H1 (cell line): ENCODE measurements at regions of chr12 and their contacts with region 1.

Region 1: GRCh38 chr12:1634590-1635191 is 5.7 kb downstream of the WNT5B start:
- DNase-seq: peak; percentile 56 to 88
- H3K4me3 ChIP-seq: no peak overlapping the region
- H3K27ac ChIP-seq: no peak overlapping the region
- H3K4me1 ChIP-seq: peaks cover 2 to 18% (median 15%) of the 10 kb centered on the region in 4 experiments
- H3K27me3 ChIP-seq: peaks cover 31 to 61% (median 47%) of the 10 kb centered on the region in 4 experiments
- CTCF ChIP-seq: peak; percentile 82 to 89 (median 86)
- EP300 ChIP-seq: no peak
- POLR2A ChIP-seq: no peak
- RAD21 ChIP-seq: peak; percentile 79 to 88

Region 2: GRCh38 chr12:1510056-1510812 is 124.5 kb before region 1 on chr12:
- CTCF ChIA-PET with region 1: no interaction called
- POLR2A ChIA-PET with region 1: no interaction called
- DNase-seq: peak in 1 of 2 experiments; percentile 10
- H3K4me3 ChIP-seq: no peak overlapping the region
- H3K27ac ChIP-seq: no peak overlapping the region
- H3K4me1 ChIP-seq: no peaks in the 10 kb centered on the region; a peak in 1 of 7 replicates
- H3K27me3 ChIP-seq: no peaks in the 10 kb centered on the region
- CTCF ChIP-seq: no peak
- EP300 ChIP-seq: no peak
- POLR2A ChIP-seq: no peak
- RAD21 ChIP-seq: no peak

Region 3: DNA sequence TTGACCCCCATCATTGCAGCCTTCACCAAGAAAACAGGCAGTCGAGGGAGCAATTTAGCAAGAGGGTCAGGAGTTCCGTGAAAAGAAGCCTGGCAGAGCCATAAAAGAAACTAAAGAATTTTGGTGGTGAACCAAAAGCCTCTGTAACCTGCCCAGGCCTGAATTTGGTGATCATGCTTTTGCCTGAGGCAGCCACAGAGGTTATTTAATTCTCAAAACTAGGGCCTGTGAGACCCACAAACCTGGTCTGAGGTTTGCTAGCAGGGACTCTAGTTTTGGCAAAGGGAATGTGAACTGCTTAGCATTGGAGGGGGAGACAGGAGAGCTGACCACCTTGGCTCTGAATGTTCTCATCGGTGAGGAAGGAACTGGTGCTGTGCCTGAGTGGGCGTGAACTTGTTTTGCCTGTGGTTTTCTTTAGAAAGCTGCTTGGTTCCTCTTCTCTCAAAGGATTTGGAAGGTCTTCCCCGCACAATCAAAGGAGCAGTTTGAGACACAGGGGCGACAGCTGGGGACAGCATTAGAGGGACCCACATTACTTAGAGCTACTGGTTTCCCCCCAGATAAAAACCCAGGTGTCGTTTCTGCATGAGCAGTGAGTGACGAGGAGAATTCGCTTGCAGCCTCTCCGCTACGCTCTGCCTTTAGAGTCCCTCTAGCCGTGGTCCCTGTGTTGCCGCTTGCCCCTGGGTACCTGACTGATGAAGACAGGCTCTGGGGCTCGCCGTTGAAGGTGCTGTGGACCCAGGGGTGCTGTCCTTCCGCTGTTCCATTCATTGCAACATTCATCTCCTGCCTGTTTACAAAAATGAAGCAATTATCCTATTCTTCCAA is 18.2 kb before region 1 on chr12:
- CTCF ChIA-PET with region 1: interaction called, 13 read pairs
- POLR2A ChIA-PET with region 1: no interaction called
- DNase-seq: no peak
- H3K4me3 ChIP-seq: no peak overlapping the region
- H3K27ac ChIP-seq: no peak overlapping the region
- H3K4me1 ChIP-seq: no peaks in the 10 kb centered on the region; a peak in 1 of 7 replicates
- H3K27me3 ChIP-seq: peaks cover 0 to 9% (median 2%) of the 10 kb centered on the region in 4 experiments; a peak in 4 of 7 replicates
- CTCF ChIP-seq: no peak
- EP300 ChIP-seq: no peak
- POLR2A ChIP-seq: no peak
- RAD21 ChIP-seq: no peak

Region 4: DNA sequence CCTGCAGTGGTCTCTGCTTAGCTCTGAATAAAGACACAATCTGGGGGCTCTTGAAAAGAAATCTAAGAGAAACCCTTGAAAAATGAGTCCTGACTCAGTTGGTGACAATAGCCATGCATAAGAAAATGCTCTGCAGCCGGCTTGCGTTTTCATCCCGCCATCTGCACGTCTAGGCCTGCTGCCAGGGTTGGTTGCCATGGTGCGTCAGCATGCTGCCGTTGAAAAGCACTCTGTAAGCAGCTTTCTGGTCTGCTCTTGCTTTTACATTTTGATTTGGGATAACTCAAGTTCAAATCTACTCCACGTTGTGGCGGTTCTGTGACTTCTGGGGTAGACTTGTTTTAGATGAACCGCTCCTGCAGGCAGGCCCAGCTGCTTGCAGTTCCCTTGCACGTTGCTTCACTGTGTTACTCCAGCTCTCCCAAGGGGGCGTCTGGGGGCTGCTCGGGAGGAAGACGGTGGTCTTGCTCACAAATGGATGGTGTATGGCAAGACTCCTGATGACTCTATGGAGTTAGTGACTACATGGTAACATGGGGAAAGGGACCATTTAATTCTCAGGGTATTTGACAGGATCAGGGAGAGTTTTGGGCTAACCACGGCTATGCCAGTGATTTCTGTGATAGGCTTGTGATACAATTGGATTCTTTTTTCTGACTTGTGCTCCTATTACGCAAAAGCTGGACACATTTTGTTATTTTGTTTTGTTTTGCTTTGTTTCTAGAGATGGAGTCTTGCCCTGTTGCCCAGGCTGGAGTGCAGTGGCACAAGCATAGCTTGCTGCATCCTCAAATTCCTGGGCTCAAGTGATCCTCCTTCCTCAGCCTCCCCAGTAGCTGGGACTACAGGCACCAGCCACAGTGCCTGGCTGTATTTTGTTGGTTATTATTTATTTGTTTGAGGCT is 10.1 kb after region 1 on chr12:
- CTCF ChIA-PET with region 1: interaction called, 36 read pairs
- POLR2A ChIA-PET with region 1: no interaction called
- DNase-seq: no peak
- H3K4me3 ChIP-seq: no peak overlapping the region
- H3K27ac ChIP-seq: no peak overlapping the region
- H3K4me1 ChIP-seq: peaks cover 0 to 5% (median 0%) of the 10 kb centered on the region in 4 experiments; a peak in 2 of 7 replicates
- H3K27me3 ChIP-seq: peaks cover 0 to 2% (median 1%) of the 10 kb centered on the region in 4 experiments; a peak in 2 of 7 replicates
- CTCF ChIP-seq: peak in 2 of 3 experiments; percentile 9 to 10; a peak in 1 of 4 replicates
- EP300 ChIP-seq: no peak
- POLR2A ChIP-seq: no peak
- RAD21 ChIP-seq: peak in 1 of 2 experiments; percentile 13; a peak in 1 of 4 replicates

Region 5: GRCh38 chr12:1650260-1650977 is 15.7 kb after region 1 on chr12:
- CTCF ChIA-PET with region 1: interaction called, 36 read pairs
- POLR2A ChIA-PET with region 1: interaction called, 3 read pairs
- DNase-seq: no peak
- H3K4me3 ChIP-seq: no peak overlapping the region
- H3K27ac ChIP-seq: no peak overlapping the region
- H3K4me1 ChIP-seq: peaks cover 0 to 3% (median 0%) of the 10 kb centered on the region in 4 experiments; a peak in 2 of 7 replicates
- H3K27me3 ChIP-seq: peaks cover 0 to 1% (median 0%) of the 10 kb centered on the region in 4 experiments; a peak in 1 of 7 replicates
- CTCF ChIP-seq: no peak
- EP300 ChIP-seq: no peak
- POLR2A ChIP-seq: no peak
- RAD21 ChIP-seq: no peak

Region 6: DNA sequence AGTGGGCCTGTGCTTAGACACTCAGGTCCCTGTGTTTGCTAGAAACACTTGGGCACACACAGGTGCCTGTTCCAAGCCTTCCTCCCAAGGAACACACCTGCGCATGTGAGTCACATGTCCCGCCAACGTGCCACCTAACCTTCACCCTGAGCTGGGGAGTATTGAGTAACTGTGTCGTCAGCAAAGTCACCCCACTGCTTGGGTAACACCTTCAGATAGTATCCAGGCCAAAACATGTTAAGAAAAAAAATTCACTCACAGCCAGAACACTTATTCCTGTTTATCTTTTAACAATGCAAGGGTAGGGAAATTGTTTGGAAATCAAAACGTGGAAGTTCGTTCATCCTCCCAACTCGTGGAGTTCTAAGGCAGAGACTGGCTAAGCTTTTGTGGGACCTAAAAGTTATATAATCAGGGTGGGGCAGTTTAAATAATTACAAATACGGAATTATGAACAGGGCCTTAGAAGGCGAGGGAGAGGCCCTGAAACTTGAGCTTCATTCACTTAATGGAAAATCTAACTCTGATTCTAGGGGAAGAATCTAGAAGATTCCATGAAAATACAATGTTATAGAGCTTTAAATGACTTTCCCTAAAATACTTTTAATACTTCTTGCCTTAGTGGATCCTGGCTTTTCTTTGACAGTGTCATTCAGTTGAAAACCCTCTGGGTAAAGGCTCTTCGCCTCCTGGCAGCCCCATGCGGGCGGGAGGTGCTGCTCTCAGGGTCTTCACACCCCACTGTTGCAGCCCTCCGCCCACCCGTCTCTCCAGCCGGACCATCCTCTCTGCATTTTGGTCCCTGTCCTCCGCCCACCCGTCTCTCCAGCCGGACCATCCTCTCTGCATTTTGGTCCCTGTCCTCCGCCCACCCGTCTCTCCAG is 25.9 kb after region 1 on chr12:
- CTCF ChIA-PET with region 1: interaction called, 13 read pairs
- POLR2A ChIA-PET with region 1: interaction called, 5 read pairs
- DNase-seq: no peak
- H3K4me3 ChIP-seq: peak overlapping the region in 2 of 4 experiments; percentile 23 to 51; a peak in 4 of 8 replicates
- H3K27ac ChIP-seq: no peak overlapping the region
- H3K4me1 ChIP-seq: no peaks in the 10 kb centered on the region
- H3K27me3 ChIP-seq: peaks cover 6 to 27% (median 20%) of the 10 kb centered on the region in 4 experiments
- CTCF ChIP-seq: no peak
- EP300 ChIP-seq: no peak
- POLR2A ChIP-seq: no peak
- RAD21 ChIP-seq: no peak

Region 7: GRCh38 chr12:1720494-1720893 is 85.8 kb after region 1 on chr12:
- CTCF ChIA-PET with region 1: no interaction called
- POLR2A ChIA-PET with region 1: no interaction called
- DNase-seq: no peak
- H3K4me3 ChIP-seq: no peak overlapping the region
- H3K27ac ChIP-seq: no peak overlapping the region
- H3K4me1 ChIP-seq: no peaks in the 10 kb centered on the region; a peak in 1 of 7 replicates
- H3K27me3 ChIP-seq: no peaks in the 10 kb centered on the region
- CTCF ChIP-seq: no peak
- EP300 ChIP-seq: no peak
- POLR2A ChIP-seq: no peak
- RAD21 ChIP-seq: no peak